ENCODE measurements at regions of chr1 and their contacts with region 1.

Region 1: DNA sequence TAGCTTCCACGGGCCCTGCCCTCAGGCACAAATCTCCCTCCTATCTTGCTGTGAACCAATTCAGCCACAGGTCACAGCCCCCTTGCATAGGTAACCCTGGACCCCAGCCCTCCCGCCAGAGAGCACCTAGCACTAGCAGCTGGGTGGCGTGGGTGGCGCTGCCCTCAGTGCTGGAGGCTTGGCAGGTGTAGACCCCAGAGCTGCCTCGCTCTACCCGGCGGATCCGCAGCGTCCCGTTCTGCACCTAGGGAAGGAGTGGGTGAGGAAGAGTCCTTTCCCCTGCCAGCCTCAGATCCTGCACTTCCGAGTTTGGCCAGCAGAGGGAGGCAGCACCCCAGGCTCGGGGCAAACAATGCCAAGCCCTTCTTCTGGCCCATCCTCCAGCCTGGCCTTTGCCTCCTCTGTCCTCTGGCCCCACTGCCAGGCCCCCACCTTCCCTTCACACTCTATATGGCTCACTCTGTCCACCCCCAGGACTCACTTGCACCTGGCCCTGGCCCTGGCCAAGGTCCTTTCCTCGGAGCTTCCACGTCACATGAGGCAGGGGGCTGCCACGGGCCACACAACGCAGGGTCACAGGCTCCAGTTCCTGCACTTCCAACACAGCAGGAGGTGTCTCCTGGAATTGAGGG is 9.0 kb downstream of the IGSF9 start:
- DNase-seq: peak; percentile 66 to 77
- ATAC-seq: peak; percentile 61 to 88 (median 78)
- H3K4me3 ChIP-seq: no peak overlapping the region
- H3K27ac ChIP-seq: no peak overlapping the region
- H3K4me1 ChIP-seq: no peaks in the 10 kb centered on the region
- H3K27me3 ChIP-seq: peaks cover 0 to 5% (median 2%) of the 10 kb centered on the region in 3 donors
- CTCF ChIP-seq: peak; percentile 99

Region 2: GRCh38 chr1:160006312-160006940 is 70.0 kb after region 1 on chr1:
- intact Hi-C with region 1: loop called (anchors 1 to 2 kb)
- DNase-seq: peak; percentile 58 to 67
- ATAC-seq: peak in 2 of 4 donors; percentile 59 to 60
- H3K4me3 ChIP-seq: no peak overlapping the region
- H3K27ac ChIP-seq: no peak overlapping the region
- H3K4me1 ChIP-seq: no peaks in the 10 kb centered on the region
- H3K27me3 ChIP-seq: no peaks in the 10 kb centered on the region
- CTCF ChIP-seq: peak; percentile 62